PC-3 (cell line): ENCODE measurements at regions of chr5 and their contacts with region 1.

Region 1: GRCh38 chr5:56900858-56901578 is 8.4 kb upstream of the SETD9 start:
- DNase-seq: peak; percentile 56
- ATAC-seq: peak; percentile 62
- H3K4me3 ChIP-seq: no peak overlapping the region
- H3K27ac ChIP-seq: no peak overlapping the region
- H3K4me1 ChIP-seq: no peaks in the 10 kb centered on the region
- H3K27me3 ChIP-seq: no peaks in the 10 kb centered on the region
- CTCF ChIP-seq: peak; percentile 64

Region 2: GRCh38 chr5:56481428-56482357 is 419.3 kb before region 1 on chr5:
- CTCF ChIA-PET with region 1: no interaction called
- POLR2A ChIA-PET with region 1: no interaction called
- intact Hi-C with region 1: no loop called
- DNase-seq: peak; percentile 1
- ATAC-seq: peak; percentile 50; the same call in 1 of the 2 replicates
- H3K4me3 ChIP-seq: peak overlapping the region; percentile 71
- H3K27ac ChIP-seq: no peak overlapping the region
- H3K4me1 ChIP-seq: peaks cover 4% of the 10 kb centered on the region; the same call in 1 of the 2 replicates
- H3K27me3 ChIP-seq: no peaks in the 10 kb centered on the region
- CTCF ChIP-seq: peak; percentile 32; the same call in 1 of the 2 replicates

Region 3: GRCh38 chr5:57082441-57083067 is 181.5 kb after region 1 on chr5:
- CTCF ChIA-PET with region 1: no interaction called
- POLR2A ChIA-PET with region 1: no interaction called
- intact Hi-C with region 1: loop called (anchors 2 kb)
- DNase-seq: peak; percentile 47
- ATAC-seq: peak; percentile 46; the same call in 1 of the 2 replicates
- H3K4me3 ChIP-seq: no peak overlapping the region
- H3K27ac ChIP-seq: no peak overlapping the region
- H3K4me1 ChIP-seq: no peaks in the 10 kb centered on the region
- H3K27me3 ChIP-seq: no peaks in the 10 kb centered on the region
- CTCF ChIP-seq: peak; percentile 51; the same call in 1 of the 2 replicates

Region 4: DNA sequence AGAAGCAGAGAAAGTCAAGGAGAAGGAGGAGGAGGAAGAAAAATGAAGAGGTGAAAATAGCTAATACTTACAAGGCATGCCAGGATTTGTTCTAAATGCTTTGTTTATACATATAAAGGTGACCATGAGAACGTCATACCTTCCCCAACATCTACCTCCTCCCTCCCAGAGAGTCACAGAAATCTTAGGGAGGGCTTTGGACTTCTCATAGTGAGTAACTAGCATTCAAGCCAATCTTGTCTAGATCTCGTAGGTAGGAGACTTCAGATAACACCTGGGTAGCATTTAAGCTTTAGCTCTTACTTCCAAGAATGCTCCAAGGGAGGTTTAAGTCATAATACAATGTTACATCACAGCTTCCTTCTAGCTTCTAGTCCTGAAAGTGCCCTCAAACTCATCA is 236.4 kb after region 1 on chr5:
- CTCF ChIA-PET with region 1: interaction called, 4 read pairs
- POLR2A ChIA-PET with region 1: no interaction called
- intact Hi-C with region 1: loop called (anchors 2 kb)
- DNase-seq: no peak
- ATAC-seq: no peak
- H3K4me3 ChIP-seq: no peak overlapping the region
- H3K27ac ChIP-seq: no peak overlapping the region
- H3K4me1 ChIP-seq: no peaks in the 10 kb centered on the region
- H3K27me3 ChIP-seq: no peaks in the 10 kb centered on the region
- CTCF ChIP-seq: no peak

Region 5: DNA sequence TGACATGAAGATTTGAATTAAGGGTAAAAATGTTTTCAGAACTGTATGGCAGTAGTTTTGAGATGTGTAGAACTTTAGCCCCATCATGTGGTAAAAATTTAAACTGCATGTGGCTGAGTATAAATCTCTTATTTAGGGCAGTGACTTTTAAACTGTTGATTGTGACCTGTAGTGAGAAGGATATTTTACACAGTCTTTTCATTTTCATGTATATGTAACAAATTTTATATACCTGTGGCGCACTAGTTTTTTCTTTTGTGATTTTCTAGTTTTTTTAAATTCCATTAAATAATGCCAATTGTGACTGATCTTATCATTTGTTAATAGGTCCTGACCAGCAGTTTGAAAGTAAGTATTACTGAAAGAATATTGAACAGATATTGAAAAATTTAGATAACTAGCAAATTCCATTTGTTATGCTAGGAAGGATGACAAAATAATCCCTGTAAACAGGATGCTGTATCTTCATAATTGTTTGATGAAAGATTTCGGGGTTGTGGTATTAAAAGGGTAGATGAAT is 320.1 kb after region 1 on chr5:
- CTCF ChIA-PET with region 1: no interaction called
- POLR2A ChIA-PET with region 1: no interaction called
- intact Hi-C with region 1: loop called (anchors 1 kb)
- DNase-seq: peak; percentile 72
- ATAC-seq: peak; percentile 56
- H3K4me3 ChIP-seq: no peak overlapping the region
- H3K27ac ChIP-seq: no peak overlapping the region
- H3K4me1 ChIP-seq: peaks cover 10% of the 10 kb centered on the region
- H3K27me3 ChIP-seq: no peaks in the 10 kb centered on the region
- CTCF ChIP-seq: peak; percentile 76

Region 6: GRCh38 chr5:57277085-57277484 is 376.1 kb after region 1 on chr5:
- CTCF ChIA-PET with region 1: no interaction called
- POLR2A ChIA-PET with region 1: no interaction called
- intact Hi-C with region 1: loop called (anchors 1 kb)
- DNase-seq: peak; percentile 50
- ATAC-seq: no peak
- H3K4me3 ChIP-seq: no peak overlapping the region
- H3K27ac ChIP-seq: no peak overlapping the region
- H3K4me1 ChIP-seq: no peaks in the 10 kb centered on the region
- H3K27me3 ChIP-seq: no peaks in the 10 kb centered on the region
- CTCF ChIP-seq: peak; percentile 55